Mammary epithelial cell (primary cell): ENCODE measurements at regions of chr16 and their contacts with region 1.

Region 1: GRCh38 chr16:50441486-50442157 is 72.8 kb upstream of the BRD7 start:
- DNase-seq: no peak
- H3K4me3 ChIP-seq: no peak overlapping the region
- H3K27ac ChIP-seq: no peak overlapping the region
- H3K4me1 ChIP-seq: no peaks in the 10 kb centered on the region
- H3K27me3 ChIP-seq: no peaks in the 10 kb centered on the region
- CTCF ChIP-seq: no peak

Region 2: DNA sequence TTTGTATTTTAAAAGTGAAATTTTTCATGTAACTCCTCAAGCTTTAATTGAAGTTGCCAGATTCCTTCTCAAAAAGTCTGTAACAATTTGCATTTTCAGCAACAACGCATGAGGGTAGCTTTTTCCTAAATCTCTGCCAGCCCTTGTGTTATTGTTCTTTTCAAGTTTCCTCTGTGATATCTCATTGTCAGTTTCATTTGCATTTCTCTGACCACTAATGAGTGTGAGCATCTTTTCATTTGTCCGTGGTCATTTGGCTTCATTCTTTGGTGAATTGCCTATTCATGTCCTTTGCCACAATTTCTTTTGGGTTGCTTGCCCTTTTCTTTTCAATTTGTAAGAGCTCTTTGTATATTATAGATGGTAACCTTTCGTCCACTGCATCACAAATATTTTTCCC is 38.6 kb after region 1 on chr16:
- CTCF ChIA-PET with region 1: no interaction called
- dilution Hi-C with region 1: loop called (anchors 5 kb)
- in situ Hi-C with region 1: no loop called
- intact Hi-C with region 1: no loop called
- DNase-seq: no peak
- H3K4me3 ChIP-seq: no peak overlapping the region
- H3K27ac ChIP-seq: no peak overlapping the region
- H3K4me1 ChIP-seq: peaks cover 6% of the 10 kb centered on the region
- H3K27me3 ChIP-seq: no peaks in the 10 kb centered on the region
- CTCF ChIP-seq: no peak

Region 3: DNA sequence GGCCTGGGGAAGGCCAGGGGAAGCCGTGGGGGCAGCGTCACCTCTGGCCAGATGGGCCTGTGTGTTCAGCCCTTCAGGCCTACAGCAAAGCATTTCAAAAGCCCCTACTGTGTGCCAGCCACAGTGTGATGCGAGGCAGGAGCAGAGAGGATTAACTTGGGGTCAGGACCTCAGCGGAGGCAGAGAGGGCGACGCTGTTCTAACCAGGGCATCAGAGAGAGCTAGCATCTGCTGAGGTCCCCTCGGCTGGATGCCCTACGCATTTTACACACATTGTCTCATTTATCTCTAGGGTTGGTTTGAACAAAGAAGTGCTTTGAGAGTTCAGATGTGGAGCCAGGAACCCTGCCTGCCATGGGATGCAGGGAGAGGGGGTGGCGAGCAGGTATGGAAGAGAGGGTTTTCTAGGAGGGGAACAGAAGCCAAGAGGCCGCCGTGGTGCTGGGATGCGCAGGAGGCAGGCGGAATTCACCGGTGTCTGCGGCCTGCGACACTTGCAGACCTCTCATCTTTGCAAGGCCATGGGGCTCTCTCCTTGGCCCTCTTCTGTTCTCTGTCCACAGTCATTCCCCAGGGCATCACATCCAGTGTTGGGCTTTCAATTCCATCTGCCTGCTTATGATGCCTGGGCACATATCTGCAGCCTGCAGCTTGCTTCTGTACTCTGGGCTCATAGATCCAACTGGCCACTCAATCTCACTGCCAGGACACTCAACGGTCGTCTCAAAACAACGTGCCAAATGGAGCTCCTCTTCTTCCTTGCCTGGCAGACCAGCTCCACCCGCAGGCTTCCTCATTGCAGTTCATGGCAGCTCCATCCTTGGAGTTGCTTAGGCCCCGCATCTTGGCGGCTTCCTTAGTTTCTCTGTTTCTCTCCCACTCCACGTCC is 98.4 kb after region 1 on chr16:
- CTCF ChIA-PET with region 1: no interaction called
- dilution Hi-C with region 1: loop called (anchors 5 kb)
- in situ Hi-C with region 1: no loop called
- intact Hi-C with region 1: no loop called
- DNase-seq: no peak
- H3K4me3 ChIP-seq: no peak overlapping the region
- H3K27ac ChIP-seq: no peak overlapping the region
- H3K4me1 ChIP-seq: peaks cover 14% of the 10 kb centered on the region
- H3K27me3 ChIP-seq: no peaks in the 10 kb centered on the region
- CTCF ChIP-seq: no peak

Region 4: GRCh38 chr16:50814541-50814940 is 372.9 kb after region 1 on chr16:
- CTCF ChIA-PET with region 1: no interaction called
- dilution Hi-C with region 1: no loop called
- in situ Hi-C with region 1: no loop called
- intact Hi-C with region 1: no loop called
- DNase-seq: no peak
- H3K4me3 ChIP-seq: no peak overlapping the region
- H3K27ac ChIP-seq: no peak overlapping the region
- H3K4me1 ChIP-seq: no peaks in the 10 kb centered on the region
- H3K27me3 ChIP-seq: no peaks in the 10 kb centered on the region
- CTCF ChIP-seq: no peak